Cardiac septum (tissue), 1 donor: ENCODE measurements at regions of chr10 and their contacts with region 1.

Region 1: GRCh38 chr10:88553116-88553752 is 29.9 kb downstream of the RNLS start:
- DNase-seq: no peak

Region 2: DNA sequence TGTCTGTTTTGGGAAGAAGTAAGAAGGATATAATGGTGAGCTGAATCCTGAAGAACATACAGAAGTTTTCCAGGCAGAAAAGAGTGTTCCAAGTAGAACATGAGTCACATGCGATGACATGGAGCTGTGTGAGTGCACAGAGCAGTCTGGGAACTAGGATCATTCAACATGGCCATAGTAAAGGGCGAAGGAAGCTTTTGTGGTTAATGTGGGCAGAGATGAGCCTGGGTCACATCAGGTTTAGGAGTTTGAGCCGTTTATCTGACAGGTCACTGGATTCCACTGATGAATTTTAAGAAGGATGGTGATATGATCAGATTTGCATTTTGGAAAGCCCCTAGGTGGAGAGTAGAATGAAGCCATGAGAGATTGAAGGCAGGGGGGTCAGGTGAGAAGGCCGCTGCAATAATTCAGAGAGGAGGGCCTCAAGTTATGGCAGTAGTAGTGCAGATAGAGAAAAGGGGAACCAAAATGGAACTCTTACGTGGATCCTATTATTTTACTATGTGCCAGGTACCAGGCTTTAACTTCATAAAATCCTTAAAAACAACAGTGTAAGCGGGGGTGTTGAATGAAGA is 141.4 kb before region 1 on chr10:
- intact Hi-C with region 1: loop called (anchors 10 kb)
- DNase-seq: no peak

Region 3: GRCh38 chr10:88715517-88715916 is 162.3 kb after region 1 on chr10:
- intact Hi-C with region 1: no loop called
- DNase-seq: no peak